ENCODE measurements at regions of chr18 and their contacts with region 1.

Region 1: GRCh38 chr18:9334329-9334972 is at the start of gene TWSG1:
- DNase-seq: peak; percentile 97
- ATAC-seq: peak; percentile 99
- total RNA-seq, gene TWSG1: 9.8 TPM

Region 2: GRCh38 chr18:9079818-9080528 is 254.5 kb before region 1 on chr18:
- intact Hi-C with region 1: loop called (anchors 5 kb)
- DNase-seq: no peak
- ATAC-seq: no peak

Region 3: DNA sequence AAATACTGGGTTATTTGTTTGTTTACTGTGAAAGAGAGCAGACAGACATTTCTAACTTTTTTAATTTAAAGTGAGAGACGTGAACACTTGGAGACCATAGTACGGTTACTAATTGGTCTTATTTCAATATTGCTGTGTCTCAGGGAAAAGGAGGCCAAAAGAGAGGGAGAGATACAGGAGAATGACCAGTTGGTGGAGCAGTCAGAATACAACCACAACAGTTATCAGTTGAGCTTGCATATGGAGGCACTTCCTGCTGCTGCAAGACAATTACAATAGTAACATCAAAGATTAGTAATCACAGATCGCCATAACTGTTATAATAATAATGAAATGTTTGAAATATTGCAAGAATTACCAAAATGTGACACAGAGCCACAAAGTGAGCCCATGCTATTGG is 58.3 kb after region 1 on chr18:
- intact Hi-C with region 1: no loop called
- DNase-seq: no peak
- ATAC-seq: no peak

Region 4: DNA sequence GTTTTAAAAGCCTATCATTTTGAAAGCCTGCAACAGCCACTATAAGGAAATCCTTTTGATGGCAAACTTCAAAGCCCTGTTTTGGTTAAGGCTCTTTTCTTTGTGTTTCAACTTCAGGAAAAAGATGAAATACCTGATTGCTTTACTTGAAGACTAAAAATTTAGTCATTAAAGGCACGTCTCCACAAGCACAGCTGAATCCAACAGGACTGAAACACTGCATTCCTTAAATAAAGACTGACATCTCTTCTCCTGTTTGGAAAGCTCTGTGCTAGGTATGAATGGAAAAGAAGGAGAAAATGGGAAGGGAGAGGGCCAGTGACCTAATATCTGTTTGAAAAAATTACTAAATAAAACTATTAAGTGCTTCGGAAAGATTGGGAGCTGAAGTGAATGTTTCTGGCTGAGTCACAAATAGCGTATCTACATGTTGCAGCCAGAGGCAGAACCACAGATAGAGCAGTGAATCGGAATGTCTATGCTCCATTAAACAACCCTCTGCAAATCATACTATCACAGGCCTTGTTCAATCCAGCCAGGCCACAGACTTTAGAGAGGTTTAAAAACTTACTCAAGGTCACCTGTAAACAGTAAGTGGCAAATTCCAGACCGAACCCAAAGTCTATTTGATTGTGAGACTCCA is 119.7 kb after region 1 on chr18:
- intact Hi-C with region 1: no loop called
- DNase-seq: no peak
- ATAC-seq: no peak

Region 5: DNA sequence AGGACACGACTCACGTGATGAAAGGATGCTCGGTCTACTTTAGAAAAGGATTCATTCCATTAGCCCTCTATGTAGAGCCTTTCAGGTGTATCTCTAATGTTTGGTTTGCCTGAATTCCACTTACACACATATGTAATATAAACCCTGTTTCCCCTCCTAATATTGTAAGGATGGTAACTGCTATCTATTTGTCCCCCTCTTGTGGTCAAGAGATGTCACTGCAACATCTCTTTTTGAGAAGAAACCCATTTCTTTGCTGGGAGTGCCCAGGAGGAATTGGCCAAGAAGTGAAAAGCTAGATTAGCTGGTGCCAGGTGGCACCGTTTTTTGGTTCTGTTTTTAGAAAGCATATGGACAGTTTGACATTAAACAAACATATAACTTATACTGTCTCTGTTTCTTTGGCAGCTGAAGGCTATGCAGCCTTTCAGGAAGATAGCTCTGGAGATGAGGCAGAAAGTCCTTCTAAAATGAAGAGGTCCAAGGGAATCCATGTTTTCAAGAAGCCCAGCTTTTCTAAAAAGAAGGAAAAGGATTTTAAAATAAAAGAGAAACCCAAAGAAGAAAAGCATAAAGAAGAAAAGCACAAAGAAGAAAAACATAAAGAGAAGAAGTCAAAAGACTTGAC is 182.1 kb after region 1 on chr18:
- intact Hi-C with region 1: loop called (anchors 10 kb)
- DNase-seq: no peak
- ATAC-seq: no peak

Measured in Right ventricle myocardium inferior (tissue), 1 donor.